ENCODE measurements at regions of chrX and their contacts with region 1.

Region 1: GRCh38 chrX:138018143-138018807 is 452.3 kb downstream of the ZIC3 start:
- DNase-seq: no peak
- ATAC-seq: no peak
- H3K4me3 ChIP-seq: no peak overlapping the region
- H3K27ac ChIP-seq: no peak overlapping the region
- H3K4me1 ChIP-seq: no peaks in the 10 kb centered on the region
- H3K27me3 ChIP-seq: no peaks in the 10 kb centered on the region
- CTCF ChIP-seq: no peak
- POLR2A ChIP-seq: no peak
- RAD21 ChIP-seq: no peak

Region 2: GRCh38 chrX:137945470-137945869 is 72.8 kb before region 1 on chrX:
- CTCF ChIA-PET with region 1: no interaction called
- POLR2A ChIA-PET with region 1: no interaction called
- dilution Hi-C with region 1: no loop called
- in situ Hi-C with region 1: no loop called
- intact Hi-C with region 1: loop called (anchors 10 kb)
- DNase-seq: no peak
- ATAC-seq: no peak
- H3K4me3 ChIP-seq: no peak overlapping the region
- H3K27ac ChIP-seq: no peak overlapping the region
- H3K4me1 ChIP-seq: no peaks in the 10 kb centered on the region
- H3K27me3 ChIP-seq: no peaks in the 10 kb centered on the region
- CTCF ChIP-seq: no peak
- POLR2A ChIP-seq: no peak
- RAD21 ChIP-seq: no peak

Region 3: GRCh38 chrX:139025816-139026215 is 1007.5 kb after region 1 on chrX:
- CTCF ChIA-PET with region 1: no interaction called
- POLR2A ChIA-PET with region 1: no interaction called
- dilution Hi-C with region 1: no loop called
- in situ Hi-C with region 1: no loop called
- intact Hi-C with region 1: no loop called
- DNase-seq: no peak
- ATAC-seq: no peak
- H3K4me3 ChIP-seq: no peak overlapping the region
- H3K27ac ChIP-seq: no peak overlapping the region
- H3K4me1 ChIP-seq: no peaks in the 10 kb centered on the region
- H3K27me3 ChIP-seq: no peaks in the 10 kb centered on the region
- CTCF ChIP-seq: no peak
- POLR2A ChIP-seq: no peak
- RAD21 ChIP-seq: no peak